ENCODE measurements at regions of chr1 and their contacts with region 1.

Region 1: DNA sequence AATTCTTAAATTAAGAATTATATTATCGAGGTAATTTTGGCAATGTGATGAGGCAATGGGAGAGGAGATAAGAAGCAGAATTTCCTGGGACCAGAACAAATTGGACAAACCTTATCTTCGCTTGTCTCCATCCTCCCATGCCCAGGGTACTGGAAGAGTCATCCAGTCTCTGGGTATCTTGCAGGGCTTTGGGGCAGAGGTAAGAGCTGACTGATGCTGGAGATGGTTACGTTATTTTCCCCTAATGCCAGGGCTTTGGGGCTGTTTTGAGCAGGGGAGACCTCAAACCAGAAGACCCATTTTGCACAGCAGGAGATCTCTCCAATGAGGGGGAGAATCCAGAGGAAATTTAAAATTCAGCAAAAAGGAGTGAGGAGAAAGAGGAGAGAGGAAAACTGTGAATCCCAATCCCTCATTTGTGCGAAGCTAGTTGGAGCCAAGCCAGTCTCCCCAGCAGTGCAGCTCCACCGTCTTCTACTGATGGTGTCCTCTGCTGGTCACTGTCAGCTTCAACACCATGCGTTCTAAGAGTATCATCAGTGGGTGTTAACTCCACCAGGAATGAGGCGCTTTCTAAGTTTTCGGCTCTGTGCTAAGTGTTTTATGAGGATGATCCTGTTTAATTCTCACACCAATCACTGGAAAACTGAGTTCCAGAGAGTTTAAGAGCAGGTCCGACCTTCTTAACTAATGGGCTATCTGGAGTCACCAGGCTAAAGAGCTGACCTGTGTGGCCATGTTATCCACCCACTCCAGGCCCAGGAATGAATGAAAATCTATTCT is 86.8 kb upstream of the CD34 start:
- DNase-seq: peak; percentile 75
- H3K4me3 ChIP-seq: no peak overlapping the region
- H3K27ac ChIP-seq: no peak overlapping the region
- H3K4me1 ChIP-seq: no peaks in the 10 kb centered on the region
- H3K27me3 ChIP-seq: peaks cover 14 to 29% of the 10 kb centered on the region in 2 experiments
- CTCF ChIP-seq: peak; percentile 89 to 92
- POLR2A ChIP-seq: no peak

Region 2: DNA sequence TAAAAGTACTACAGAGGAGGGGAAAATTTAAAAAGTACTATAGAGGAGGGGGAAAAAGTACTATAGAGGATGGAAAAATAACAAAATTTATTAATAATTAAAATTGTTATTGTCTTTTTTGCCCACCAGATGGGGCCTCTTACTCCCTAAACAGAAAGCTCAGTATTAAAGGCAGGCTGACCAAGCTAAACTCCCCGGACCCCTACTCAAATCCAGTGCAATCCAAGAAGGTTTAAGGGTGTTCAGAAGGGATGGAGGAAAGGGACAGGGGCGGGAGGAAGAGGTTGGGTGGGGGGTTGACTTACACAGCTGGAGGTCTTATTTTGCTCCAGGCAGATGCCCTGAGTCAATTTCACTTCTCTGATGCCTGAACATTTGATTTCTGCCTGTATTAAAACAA is 100.5 kb before region 1 on chr1:
- CTCF ChIA-PET with region 1: interaction called, 54 read pairs
- POLR2A ChIA-PET with region 1: no interaction called
- dilution Hi-C with region 1: no loop called
- intact Hi-C with region 1: loop called (anchors 1 kb)
- DNase-seq: peak; percentile 57
- H3K4me3 ChIP-seq: no peak overlapping the region
- H3K27ac ChIP-seq: no peak overlapping the region
- H3K4me1 ChIP-seq: peaks cover 6% of the 10 kb centered on the region
- H3K27me3 ChIP-seq: no peaks in the 10 kb centered on the region
- CTCF ChIP-seq: peak; percentile 8 to 11
- POLR2A ChIP-seq: no peak

Region 3: GRCh38 chr1:207981976-207982375 is 15.7 kb before region 1 on chr1:
- CTCF ChIA-PET with region 1: interaction called, 13 read pairs
- POLR2A ChIA-PET with region 1: no interaction called
- dilution Hi-C with region 1: no loop called
- intact Hi-C with region 1: no loop called
- DNase-seq: peak; percentile 25
- H3K4me3 ChIP-seq: no peak overlapping the region
- H3K27ac ChIP-seq: no peak overlapping the region
- H3K4me1 ChIP-seq: no peaks in the 10 kb centered on the region
- H3K27me3 ChIP-seq: peaks cover 17 to 24% of the 10 kb centered on the region in 2 experiments
- CTCF ChIP-seq: peak; percentile 60 to 68
- POLR2A ChIP-seq: no peak

Region 4: GRCh38 chr1:208007938-208008342 is 10.3 kb after region 1 on chr1:
- CTCF ChIA-PET with region 1: interaction called, 20 read pairs
- POLR2A ChIA-PET with region 1: no interaction called
- dilution Hi-C with region 1: no loop called
- intact Hi-C with region 1: no loop called
- DNase-seq: peak; percentile 64
- H3K4me3 ChIP-seq: no peak overlapping the region
- H3K27ac ChIP-seq: no peak overlapping the region
- H3K4me1 ChIP-seq: peaks cover 7% of the 10 kb centered on the region
- H3K27me3 ChIP-seq: peaks cover 0 to 2% of the 10 kb centered on the region in 2 experiments
- CTCF ChIP-seq: no peak
- POLR2A ChIP-seq: no peak

Region 5: DNA sequence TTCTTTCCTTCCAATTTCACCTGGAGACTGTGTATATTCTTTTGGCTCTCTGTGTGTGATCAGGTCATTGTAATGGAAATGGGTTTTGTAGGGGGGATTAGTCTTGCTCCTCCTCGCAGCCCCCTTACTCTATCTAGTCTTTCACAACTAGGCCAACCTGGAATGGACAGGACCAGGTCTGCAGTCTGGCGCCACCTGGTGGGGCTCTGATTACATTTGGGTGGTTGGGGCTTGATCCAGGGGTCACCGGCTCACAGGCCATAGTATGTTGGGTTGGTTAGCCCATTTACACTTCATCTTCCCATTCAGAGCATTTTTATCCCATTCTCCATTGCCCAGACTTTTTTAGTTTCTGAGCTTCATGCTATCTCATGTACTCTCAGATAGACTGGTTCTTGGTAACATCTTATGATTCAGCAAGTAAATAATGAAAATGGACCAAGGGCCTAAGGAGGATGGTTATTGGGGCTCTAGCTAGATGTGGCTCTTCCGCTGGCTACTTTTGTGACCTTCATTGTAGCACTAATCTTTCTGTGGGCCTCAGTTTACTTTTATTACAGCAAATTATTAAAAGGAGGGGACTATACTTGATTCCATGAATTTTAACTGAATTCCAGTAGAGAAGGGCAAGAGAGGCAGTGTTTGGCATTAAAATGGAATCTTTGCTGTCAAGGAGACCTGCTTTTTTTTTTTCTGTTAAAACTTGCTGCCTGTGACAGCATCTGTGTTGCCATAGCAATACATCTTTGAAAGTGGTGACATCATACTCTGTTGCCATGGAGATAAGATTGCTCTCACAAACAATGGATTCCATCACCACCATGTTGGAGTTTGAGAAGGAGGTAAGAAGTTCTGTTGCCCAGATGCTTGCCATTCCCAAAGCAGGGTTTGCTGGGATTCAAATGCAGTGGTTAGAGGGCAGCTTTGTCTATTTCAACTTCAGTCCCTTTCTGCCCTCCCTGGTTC is 96.4 kb after region 1 on chr1:
- CTCF ChIA-PET with region 1: no interaction called
- POLR2A ChIA-PET with region 1: no interaction called
- dilution Hi-C with region 1: no loop called
- intact Hi-C with region 1: no loop called
- DNase-seq: peak; percentile 57
- H3K4me3 ChIP-seq: no peak overlapping the region
- H3K27ac ChIP-seq: peak overlapping the region; percentile 63
- H3K4me1 ChIP-seq: no peaks in the 10 kb centered on the region
- H3K27me3 ChIP-seq: no peaks in the 10 kb centered on the region
- CTCF ChIP-seq: peak; percentile 80 to 82
- POLR2A ChIP-seq: no peak

Region 6: GRCh38 chr1:208251911-208252835 is 254.5 kb after region 1 on chr1:
- CTCF ChIA-PET with region 1: no interaction called
- POLR2A ChIA-PET with region 1: no interaction called
- dilution Hi-C with region 1: no loop called
- intact Hi-C with region 1: loop called (anchors 1 kb)
- DNase-seq: no peak
- H3K4me3 ChIP-seq: no peak overlapping the region
- H3K27ac ChIP-seq: no peak overlapping the region
- H3K4me1 ChIP-seq: no peaks in the 10 kb centered on the region
- H3K27me3 ChIP-seq: peaks cover 37 to 39% of the 10 kb centered on the region in 2 experiments
- CTCF ChIP-seq: peak in 1 of 2 donors; percentile 62
- POLR2A ChIP-seq: no peak

Region 7: GRCh38 chr1:208270651-208271111 is 273.0 kb after region 1 on chr1:
- CTCF ChIA-PET with region 1: no interaction called
- POLR2A ChIA-PET with region 1: no interaction called
- dilution Hi-C with region 1: no loop called
- intact Hi-C with region 1: no loop called
- DNase-seq: no peak
- H3K4me3 ChIP-seq: no peak overlapping the region
- H3K27ac ChIP-seq: no peak overlapping the region
- H3K4me1 ChIP-seq: no peaks in the 10 kb centered on the region
- H3K27me3 ChIP-seq: peaks cover 23 to 67% of the 10 kb centered on the region in 2 experiments
- CTCF ChIP-seq: no peak
- POLR2A ChIP-seq: no peak

Measured in endothelial cell of umbilical vein (primary cell).